ENCODE measurements at regions of chr18 and their contacts with region 1.

Region 1: DNA sequence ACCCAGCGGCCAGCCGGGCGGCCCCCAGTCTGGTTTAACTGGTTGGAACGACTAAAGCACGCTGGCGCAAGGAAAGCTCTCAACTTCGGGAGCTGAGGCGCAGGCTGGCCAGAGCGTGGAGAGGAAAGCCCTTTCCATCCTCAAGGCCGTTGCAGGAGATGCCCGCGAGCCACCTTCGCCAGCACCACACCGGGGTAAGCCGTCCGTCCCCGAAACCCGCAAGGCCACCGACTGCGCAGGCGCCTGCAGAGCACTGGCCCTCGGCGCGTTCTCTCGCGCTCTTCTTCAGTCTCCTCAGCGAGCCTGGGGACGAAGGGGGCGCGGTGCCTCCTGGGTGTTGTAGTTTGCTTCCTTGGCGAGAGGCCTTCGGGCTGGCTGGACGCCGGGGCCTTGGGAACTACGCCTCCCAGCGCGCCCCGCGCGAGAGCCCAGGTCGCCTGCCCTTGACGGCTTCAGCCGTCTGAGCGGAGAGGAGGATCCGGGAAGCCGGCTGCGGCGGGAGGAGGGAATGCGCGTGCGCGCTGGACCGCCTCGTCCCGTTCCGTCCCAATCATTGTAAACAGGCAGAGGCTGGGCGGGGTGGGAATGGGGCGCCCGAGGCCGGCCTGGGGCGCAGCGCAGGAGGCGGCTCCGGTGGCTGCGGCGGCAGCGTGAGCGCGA is at the start of gene RALBP1:
- DNase-seq: peak; percentile 93 to 99 (median 97)
- ATAC-seq: peak; percentile 98
- H3K4me3 ChIP-seq: peak within 1 kb of the TSS; percentile 72
- H3K4me3 Mint-ChIP-seq: peak within 1 kb of the TSS; percentile 98
- H3K27ac ChIP-seq: peak within 1 kb of the TSS; percentile 57 to 59
- H3K27ac Mint-ChIP-seq: peak within 1 kb of the TSS; percentile 92
- H3K4me1 ChIP-seq: peaks cover 25% of the 10 kb centered on the region
- H3K4me1 Mint-ChIP-seq: peaks cover 33% of the 10 kb centered on the region
- H3K27me3 ChIP-seq: no peaks in the 10 kb centered on the region
- H3K27me3 Mint-ChIP-seq: peaks cover 4% of the 10 kb centered on the region
- CTCF ChIP-seq: no peak
- total RNA-seq, gene RALBP1: 6.5 to 7.8 TPM

Region 2: GRCh38 chr18:8608795-8609658 is 866.1 kb before region 1 on chr18 and contains the start of gene RAB12:
- CTCF ChIA-PET with region 1: no interaction called
- POLR2A ChIA-PET with region 1: no interaction called
- intact Hi-C with region 1: loop called in 1 of 2 experiments (anchors 2 kb)
- DNase-seq: peak; percentile 74 to 95 (median 86)
- ATAC-seq: peak; percentile 84
- H3K4me3 ChIP-seq: peak within 1 kb of the TSS; percentile 92
- H3K4me3 Mint-ChIP-seq: peak within 1 kb of the TSS; percentile 92
- H3K27ac ChIP-seq: peak within 1 kb of the TSS in 1 of 2 donors; percentile 71
- H3K27ac Mint-ChIP-seq: peak within 1 kb of the TSS; percentile 87
- H3K4me1 ChIP-seq: peaks cover 40% of the 10 kb centered on the region
- H3K4me1 Mint-ChIP-seq: peaks cover 58% of the 10 kb centered on the region
- H3K27me3 ChIP-seq: no peaks in the 10 kb centered on the region
- H3K27me3 Mint-ChIP-seq: peaks cover 8% of the 10 kb centered on the region
- CTCF ChIP-seq: peak; percentile 61
- total RNA-seq, gene RAB12: 20.1 to 20.3 TPM

Region 3: DNA sequence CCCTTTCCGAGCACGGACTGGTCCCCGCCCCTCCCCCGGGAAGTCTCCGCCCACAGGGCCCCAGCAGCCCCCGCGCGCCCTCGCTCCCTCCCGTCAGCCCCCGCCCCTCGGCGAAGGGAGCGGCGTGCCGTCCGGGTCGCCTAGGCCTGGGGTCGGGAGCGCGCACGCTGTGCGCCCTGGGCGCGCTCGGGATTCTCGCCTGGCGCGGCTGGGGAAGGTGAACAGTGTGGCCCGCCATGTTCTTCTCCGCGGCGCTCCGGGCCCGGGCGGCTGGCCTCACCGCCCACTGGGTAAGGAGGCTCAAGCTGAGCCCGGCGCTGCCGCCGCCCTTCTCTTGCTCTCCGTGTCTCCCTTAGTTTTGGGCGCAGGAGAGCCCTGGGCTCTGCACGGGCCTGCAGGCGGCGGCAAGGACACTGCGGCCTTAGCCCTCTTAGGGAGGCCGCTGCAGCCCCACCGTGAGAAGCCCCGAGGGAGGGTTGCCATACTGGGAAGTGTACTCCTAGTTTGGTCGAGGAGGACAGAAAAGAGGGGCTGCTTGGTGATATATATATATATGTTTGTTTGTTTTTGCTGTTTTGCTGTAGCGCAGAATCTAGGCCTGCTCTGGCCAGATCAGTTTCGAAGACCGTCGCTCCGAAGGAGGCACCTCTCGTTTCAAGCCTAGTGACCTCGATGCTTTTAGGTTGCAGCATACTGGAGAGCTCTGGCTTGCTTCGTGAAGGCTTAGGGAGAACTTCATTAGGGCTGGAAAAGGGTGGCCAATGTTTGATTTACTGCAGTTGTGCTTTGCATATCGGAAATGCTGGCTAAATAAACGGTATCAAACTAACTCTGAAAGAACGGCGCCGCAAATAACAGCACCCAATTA is 372.4 kb before region 1 on chr18 and contains the start of gene NDUFV2:
- CTCF ChIA-PET with region 1: no interaction called
- POLR2A ChIA-PET with region 1: no interaction called
- intact Hi-C with region 1: loop called in 1 of 2 experiments (anchors 5 kb)
- DNase-seq: peak; percentile 93 to 99 (median 98)
- ATAC-seq: peak; percentile 87
- H3K4me3 ChIP-seq: peak within 1 kb of the TSS; percentile 74
- H3K4me3 Mint-ChIP-seq: peak within 1 kb of the TSS; percentile 95
- H3K27ac ChIP-seq: peak within 1 kb of the TSS; percentile 82 to 91
- H3K27ac Mint-ChIP-seq: peak within 1 kb of the TSS; percentile 90
- H3K4me1 ChIP-seq: peaks cover 22% of the 10 kb centered on the region
- H3K4me1 Mint-ChIP-seq: peaks cover 65% of the 10 kb centered on the region
- H3K27me3 ChIP-seq: no peaks in the 10 kb centered on the region
- H3K27me3 Mint-ChIP-seq: no peaks in the 10 kb centered on the region
- CTCF ChIP-seq: no peak
- total RNA-seq, gene NDUFV2: 230 to 231 TPM

Region 4: GRCh38 chr18:9209279-9209678 is 265.8 kb before region 1 on chr18:
- CTCF ChIA-PET with region 1: no interaction called
- POLR2A ChIA-PET with region 1: no interaction called
- intact Hi-C with region 1: no loop called
- DNase-seq: no peak
- ATAC-seq: no peak
- H3K4me3 ChIP-seq: no peak overlapping the region
- H3K4me3 Mint-ChIP-seq: no peak overlapping the region
- H3K27ac ChIP-seq: no peak overlapping the region
- H3K27ac Mint-ChIP-seq: no peak overlapping the region
- H3K4me1 ChIP-seq: no peaks in the 10 kb centered on the region
- H3K4me1 Mint-ChIP-seq: peaks cover 14% of the 10 kb centered on the region
- H3K27me3 ChIP-seq: no peaks in the 10 kb centered on the region
- H3K27me3 Mint-ChIP-seq: no peaks in the 10 kb centered on the region
- CTCF ChIP-seq: no peak

Region 5: GRCh38 chr18:9516437-9517064 is 41.4 kb after region 1 on chr18:
- CTCF ChIA-PET with region 1: interaction called, 4 read pairs
- POLR2A ChIA-PET with region 1: no interaction called
- intact Hi-C with region 1: loop called in 1 of 2 experiments (anchors 5 kb)
- DNase-seq: peak in 4 of 14 experiments; percentile 18 to 62 (median 56)
- ATAC-seq: peak; percentile 65
- H3K4me3 ChIP-seq: no peak overlapping the region
- H3K4me3 Mint-ChIP-seq: no peak overlapping the region
- H3K27ac ChIP-seq: no peak overlapping the region
- H3K27ac Mint-ChIP-seq: no peak overlapping the region
- H3K4me1 ChIP-seq: no peaks in the 10 kb centered on the region
- H3K4me1 Mint-ChIP-seq: peaks cover 12% of the 10 kb centered on the region
- H3K27me3 ChIP-seq: no peaks in the 10 kb centered on the region
- H3K27me3 Mint-ChIP-seq: no peaks in the 10 kb centered on the region
- CTCF ChIP-seq: peak; percentile 96

Region 6: DNA sequence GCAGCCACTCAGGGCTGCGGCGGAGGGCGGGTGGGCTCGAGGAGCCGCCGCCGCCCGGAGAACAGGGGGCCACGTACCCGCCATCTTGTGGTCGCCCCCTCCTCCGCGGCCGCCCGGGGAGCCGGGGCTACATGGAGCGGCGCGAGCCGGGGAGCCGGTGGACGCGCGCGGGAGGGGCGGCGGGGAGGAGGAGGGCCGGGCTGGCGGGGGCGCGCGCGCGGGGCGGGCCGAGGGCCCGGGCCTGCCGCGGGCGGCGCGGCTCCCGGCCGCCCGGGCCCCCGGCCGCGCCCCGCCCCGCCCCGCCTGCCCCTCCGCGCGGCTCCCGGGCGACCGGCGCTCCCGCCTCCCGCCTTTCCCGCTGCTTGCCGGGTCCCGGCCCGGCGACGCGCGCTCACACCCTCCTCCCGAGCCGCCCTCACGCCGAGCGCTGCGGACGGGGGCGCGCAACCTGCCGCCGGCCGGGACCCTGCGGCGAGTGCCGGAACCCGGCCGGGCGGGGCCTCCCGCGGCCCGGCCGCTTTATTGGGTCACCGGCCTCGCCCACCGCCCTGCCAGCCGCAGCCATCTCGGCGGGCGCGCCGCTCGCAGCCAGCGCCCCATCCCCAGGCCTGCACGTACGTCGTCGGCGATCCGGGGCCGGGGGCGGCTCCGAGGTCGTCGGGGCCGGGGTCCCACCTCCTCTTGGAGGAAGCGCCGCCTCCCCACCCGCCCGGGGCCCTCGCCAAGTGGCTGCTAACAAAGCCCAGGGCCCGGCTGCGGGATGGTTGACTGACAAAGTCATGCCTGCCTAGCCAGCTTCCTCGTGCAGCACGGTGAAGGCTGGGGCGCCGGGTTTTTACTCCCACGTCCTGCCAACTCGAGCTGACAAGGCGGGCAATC is 139.5 kb after region 1 on chr18 and contains the start of gene PPP4R1:
- CTCF ChIA-PET with region 1: no interaction called
- POLR2A ChIA-PET with region 1: no interaction called
- intact Hi-C with region 1: loop called in 1 of 2 experiments (anchors 5 kb)
- DNase-seq: peak; percentile 40 to 86 (median 66)
- ATAC-seq: peak; percentile 53
- H3K4me3 ChIP-seq: peak within 1 kb of the TSS; percentile 79
- H3K4me3 Mint-ChIP-seq: peak within 1 kb of the TSS; percentile 97
- H3K27ac ChIP-seq: peak within 1 kb of the TSS; percentile 33 to 53
- H3K27ac Mint-ChIP-seq: peak within 1 kb of the TSS; percentile 88
- H3K4me1 ChIP-seq: peaks cover 21% of the 10 kb centered on the region
- H3K4me1 Mint-ChIP-seq: peaks cover 37% of the 10 kb centered on the region
- H3K27me3 ChIP-seq: no peaks in the 10 kb centered on the region
- H3K27me3 Mint-ChIP-seq: no peaks in the 10 kb centered on the region
- CTCF ChIP-seq: no peak
- total RNA-seq, gene PPP4R1: 35.7 to 40.2 TPM

Region 7: GRCh38 chr18:10378688-10379363 is 903.7 kb after region 1 on chr18:
- CTCF ChIA-PET with region 1: no interaction called
- POLR2A ChIA-PET with region 1: no interaction called
- intact Hi-C with region 1: no loop called
- DNase-seq: no peak
- ATAC-seq: no peak
- H3K4me3 ChIP-seq: no peak overlapping the region
- H3K4me3 Mint-ChIP-seq: no peak overlapping the region
- H3K27ac ChIP-seq: no peak overlapping the region
- H3K27ac Mint-ChIP-seq: no peak overlapping the region
- H3K4me1 ChIP-seq: no peaks in the 10 kb centered on the region
- H3K4me1 Mint-ChIP-seq: no peaks in the 10 kb centered on the region
- H3K27me3 ChIP-seq: no peaks in the 10 kb centered on the region
- H3K27me3 Mint-ChIP-seq: peaks cover 4% of the 10 kb centered on the region
- CTCF ChIP-seq: no peak

Region 8: GRCh38 chr18:10525371-10526210 is 1050.5 kb after region 1 on chr18 and contains the start of gene NAPG:
- CTCF ChIA-PET with region 1: no interaction called
- POLR2A ChIA-PET with region 1: no interaction called
- intact Hi-C with region 1: loop called in 1 of 2 experiments (anchors 10 kb)
- DNase-seq: peak; percentile 75 to 98 (median 86)
- ATAC-seq: peak; percentile 85
- H3K4me3 ChIP-seq: peak within 1 kb of the TSS; percentile 87
- H3K4me3 Mint-ChIP-seq: peak within 1 kb of the TSS; percentile 99
- H3K27ac ChIP-seq: peak within 1 kb of the TSS; percentile 55 to 86
- H3K27ac Mint-ChIP-seq: peak within 1 kb of the TSS; percentile 96
- H3K4me1 ChIP-seq: peaks cover 42% of the 10 kb centered on the region
- H3K4me1 Mint-ChIP-seq: peaks cover 56% of the 10 kb centered on the region
- H3K27me3 ChIP-seq: peaks cover 0 to 5% of the 10 kb centered on the region in 2 experiments
- H3K27me3 Mint-ChIP-seq: no peaks in the 10 kb centered on the region
- CTCF ChIP-seq: no peak
- total RNA-seq, gene NAPG: 25.9 to 27.3 TPM